ENCODE measurements at regions of chr12 and their contacts with region 1.

Region 1: GRCh38 chr12:21642707-21643389 is 14.8 kb downstream of the LDHB start:
- DNase-seq: peak; percentile 7
- H3K4me3 ChIP-seq: no peak overlapping the region
- H3K27ac ChIP-seq: no peak overlapping the region
- H3K4me1 ChIP-seq: no peaks in the 10 kb centered on the region
- H3K27me3 ChIP-seq: no peaks in the 10 kb centered on the region
- CTCF ChIP-seq: no peak

Region 2: GRCh38 chr12:21451529-21451928 is 191.3 kb before region 1 on chr12:
- CTCF ChIA-PET with region 1: no interaction called
- dilution Hi-C with region 1: no loop called
- in situ Hi-C with region 1: loop called in 1 of 2 experiments (anchors 25 kb)
- intact Hi-C with region 1: no loop called
- DNase-seq: no peak
- H3K4me3 ChIP-seq: no peak overlapping the region
- H3K27ac ChIP-seq: no peak overlapping the region
- H3K4me1 ChIP-seq: no peaks in the 10 kb centered on the region
- H3K27me3 ChIP-seq: no peaks in the 10 kb centered on the region
- CTCF ChIP-seq: no peak

Region 3: DNA sequence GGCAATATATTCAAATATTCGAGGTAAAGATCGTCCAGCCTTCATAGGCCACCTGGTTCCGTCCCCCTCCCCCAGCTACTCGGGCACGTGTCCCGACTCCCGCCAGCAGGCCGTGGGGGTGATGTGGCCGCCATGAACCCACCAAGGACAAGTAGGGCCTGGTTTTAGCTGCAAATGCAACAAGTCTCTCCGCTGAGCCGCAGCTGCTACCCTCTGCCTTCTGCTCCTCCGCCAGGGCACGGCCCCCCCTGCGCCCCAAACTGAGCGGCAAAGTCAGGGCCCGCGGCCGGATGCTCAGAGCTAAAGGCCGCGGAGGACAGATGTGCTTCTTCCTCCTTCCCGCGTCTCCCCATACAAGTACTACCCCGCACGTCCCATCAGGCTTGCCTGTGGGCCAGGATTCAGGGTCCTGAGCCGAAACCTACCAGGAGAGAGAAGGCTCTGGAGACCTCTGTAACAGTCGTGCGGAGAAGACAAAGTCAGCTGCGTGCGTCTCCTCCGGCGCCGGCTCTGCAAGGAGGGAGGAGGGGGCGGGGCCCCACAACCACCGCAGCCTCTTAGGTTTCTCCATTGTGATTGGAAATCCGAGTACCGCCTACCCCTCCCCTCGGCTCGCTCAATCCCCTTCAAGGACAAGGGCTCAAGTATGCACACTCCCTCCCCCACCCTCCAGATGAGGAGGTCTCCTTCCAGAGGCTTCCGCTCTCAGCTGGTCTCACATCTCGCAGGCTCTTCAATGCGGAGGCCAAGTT is 14.7 kb after region 1 on chr12 and contains the start of gene LDHB:
- CTCF ChIA-PET with region 1: no interaction called
- dilution Hi-C with region 1: no loop called
- in situ Hi-C with region 1: no loop called
- intact Hi-C with region 1: no loop called
- DNase-seq: peak; percentile 83
- H3K4me3 ChIP-seq: peak within 1 kb of the TSS; percentile 86 to 97 (median 96)
- H3K27ac ChIP-seq: peak within 1 kb of the TSS; percentile 69
- H3K4me1 ChIP-seq: peaks cover 6% of the 10 kb centered on the region
- H3K27me3 ChIP-seq: no peaks in the 10 kb centered on the region
- CTCF ChIP-seq: no peak
- total RNA-seq, gene LDHB: 257 to 513 TPM

Region 4: DNA sequence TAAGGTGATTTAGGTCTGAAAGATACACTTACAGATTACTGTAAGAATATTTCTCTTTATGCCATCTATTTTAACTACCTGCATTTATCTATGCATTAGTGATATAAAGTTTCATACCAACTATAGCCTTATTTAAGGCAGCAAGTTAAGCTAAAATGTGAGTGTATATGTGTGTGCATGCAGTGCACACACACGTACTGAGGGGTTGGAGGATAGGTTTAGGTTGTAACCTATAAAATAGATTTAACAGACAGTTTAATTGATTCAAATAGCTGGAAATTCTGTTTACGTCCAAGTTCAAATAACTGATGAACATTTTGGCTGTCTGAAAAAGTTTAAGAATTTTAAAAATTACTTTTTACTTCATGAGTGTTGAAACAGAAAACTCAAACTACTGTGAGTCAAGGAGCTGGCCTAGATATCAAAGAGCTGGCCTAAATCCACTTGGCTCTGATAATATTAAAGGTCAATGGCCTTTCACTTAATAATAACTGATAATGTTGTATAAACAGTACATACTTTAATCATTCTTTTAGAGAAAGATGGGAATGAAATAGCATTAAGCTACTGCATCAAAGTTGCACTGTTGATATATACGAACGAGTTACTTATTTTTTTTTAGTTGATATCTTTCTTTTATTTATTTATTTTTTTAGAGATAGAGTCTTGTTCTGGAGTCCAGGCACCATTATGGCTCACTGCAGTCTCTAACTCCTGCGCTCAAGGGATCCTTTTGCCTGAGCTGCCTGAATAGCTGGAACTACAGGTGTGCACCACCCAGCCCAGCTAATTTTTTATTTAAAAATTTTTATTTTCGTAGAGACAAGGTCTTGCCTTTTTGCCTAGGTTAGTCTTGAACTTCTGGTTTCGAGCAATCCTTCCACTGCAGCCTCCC is 145.5 kb after region 1 on chr12:
- CTCF ChIA-PET with region 1: no interaction called
- dilution Hi-C with region 1: no loop called
- in situ Hi-C with region 1: no loop called
- intact Hi-C with region 1: no loop called
- DNase-seq: no peak
- H3K4me3 ChIP-seq: no peak overlapping the region
- H3K27ac ChIP-seq: no peak overlapping the region
- H3K4me1 ChIP-seq: no peaks in the 10 kb centered on the region
- H3K27me3 ChIP-seq: no peaks in the 10 kb centered on the region
- CTCF ChIP-seq: no peak

Measured in mammary epithelial cell (primary cell).